ENCODE measurements at regions of chr1 and their contacts with region 1.

Region 1: DNA sequence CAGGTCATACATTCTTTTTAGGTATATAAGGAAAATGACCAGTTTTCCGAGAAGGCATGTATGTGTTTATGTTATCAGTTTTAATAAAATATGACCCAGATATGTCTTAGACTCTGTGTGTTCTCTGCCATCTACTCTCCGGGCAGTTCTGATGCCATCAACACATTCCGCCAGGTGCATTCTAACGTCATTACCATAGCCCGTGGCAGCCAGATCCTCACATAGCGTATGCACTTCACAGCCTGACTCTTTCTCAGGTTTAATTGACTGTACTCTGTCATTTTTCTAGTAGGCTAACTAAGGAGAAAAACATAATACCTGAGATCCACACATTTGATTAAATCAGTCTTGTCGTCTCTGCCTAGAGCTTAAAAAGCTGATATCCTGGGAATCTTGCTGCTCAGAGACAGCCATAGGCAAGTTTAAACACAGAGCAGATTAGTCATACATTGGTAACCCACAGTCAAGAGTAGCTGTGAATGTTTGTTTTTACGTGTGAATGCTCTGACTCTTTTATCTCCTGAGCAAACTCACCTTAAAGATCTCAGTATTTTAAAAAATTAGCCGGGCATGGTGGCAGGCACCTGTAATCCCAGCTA is 175.9 kb downstream of the GREM2 start:
- DNase-seq: no peak
- ATAC-seq: no peak
- H3K4me3 ChIP-seq: no peak overlapping the region
- H3K4me3 Mint-ChIP-seq: no peak overlapping the region
- H3K27ac ChIP-seq: no peak overlapping the region
- H3K27ac Mint-ChIP-seq: no peak overlapping the region
- H3K4me1 ChIP-seq: no peaks in the 10 kb centered on the region
- H3K4me1 Mint-ChIP-seq: no peaks in the 10 kb centered on the region
- H3K27me3 ChIP-seq: no peaks in the 10 kb centered on the region
- H3K27me3 Mint-ChIP-seq: peaks cover 0 to 2% of the 10 kb centered on the region in 2 donors

Region 2: GRCh38 chr1:240462766-240463395 is 26.8 kb after region 1 on chr1:
- CTCF ChIA-PET with region 1: no interaction called
- POLR2A ChIA-PET with region 1: no interaction called
- DNase-seq: no peak
- ATAC-seq: no peak
- H3K4me3 ChIP-seq: no peak overlapping the region
- H3K4me3 Mint-ChIP-seq: no peak overlapping the region
- H3K27ac ChIP-seq: no peak overlapping the region
- H3K27ac Mint-ChIP-seq: no peak overlapping the region
- H3K4me1 ChIP-seq: no peaks in the 10 kb centered on the region
- H3K4me1 Mint-ChIP-seq: peaks cover 0 to 13% (median 10%) of the 10 kb centered on the region in 3 donors
- H3K27me3 ChIP-seq: no peaks in the 10 kb centered on the region
- H3K27me3 Mint-ChIP-seq: no peaks in the 10 kb centered on the region

Region 3: GRCh38 chr1:240526312-240526711 is 90.2 kb after region 1 on chr1:
- CTCF ChIA-PET with region 1: no interaction called
- POLR2A ChIA-PET with region 1: no interaction called
- DNase-seq: no peak
- ATAC-seq: no peak
- H3K4me3 ChIP-seq: no peak overlapping the region
- H3K4me3 Mint-ChIP-seq: no peak overlapping the region
- H3K27ac ChIP-seq: no peak overlapping the region
- H3K27ac Mint-ChIP-seq: no peak overlapping the region
- H3K4me1 ChIP-seq: no peaks in the 10 kb centered on the region
- H3K4me1 Mint-ChIP-seq: no peaks in the 10 kb centered on the region
- H3K27me3 ChIP-seq: no peaks in the 10 kb centered on the region
- H3K27me3 Mint-ChIP-seq: no peaks in the 10 kb centered on the region

Region 4: DNA sequence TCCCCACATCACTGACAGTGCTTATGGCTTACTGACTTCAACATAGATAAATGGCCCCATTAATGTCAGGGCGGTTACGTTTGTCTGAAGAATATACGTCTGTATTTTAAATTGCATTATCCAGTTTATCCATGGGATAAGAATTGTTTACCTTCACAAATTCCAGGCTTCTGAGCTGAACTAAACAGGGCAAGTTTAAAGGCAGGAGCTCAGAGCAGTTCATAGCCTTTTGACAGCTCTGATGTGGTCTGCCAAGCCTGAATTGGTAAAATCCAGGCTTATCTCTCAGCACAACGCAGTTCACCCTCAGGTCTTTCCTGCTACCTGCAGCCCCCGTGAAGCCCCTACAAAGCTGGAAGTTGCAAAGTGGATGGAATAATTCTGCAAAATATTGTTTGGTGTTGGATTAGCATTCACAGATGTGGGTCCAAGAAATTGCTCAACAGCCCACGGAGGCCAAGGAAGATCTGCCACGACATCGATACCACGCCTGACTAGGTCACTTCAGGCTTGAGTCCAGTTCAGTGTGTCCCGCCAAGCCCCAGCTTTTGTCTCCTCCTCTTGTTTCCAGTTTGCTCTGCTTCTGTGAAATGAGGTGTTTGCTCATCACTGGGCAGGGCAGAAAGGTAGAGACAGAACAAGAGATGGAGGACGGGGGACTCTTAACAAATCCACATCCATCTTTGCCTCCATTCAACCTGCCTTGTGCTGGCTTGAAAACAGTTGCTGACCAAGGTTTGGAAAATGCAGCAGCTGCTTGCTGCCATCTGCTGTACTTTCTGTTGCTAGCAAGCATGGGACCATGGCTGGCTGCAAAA is 255.7 kb after region 1 on chr1:
- CTCF ChIA-PET with region 1: interaction called in 1 of 2 experiments, 10 read pairs
- POLR2A ChIA-PET with region 1: no interaction called
- DNase-seq: peak in 7 of 35 experiments; percentile 0 to 35 (median 7)
- ATAC-seq: no peak
- H3K4me3 ChIP-seq: no peak overlapping the region
- H3K4me3 Mint-ChIP-seq: no peak overlapping the region
- H3K27ac ChIP-seq: no peak overlapping the region
- H3K27ac Mint-ChIP-seq: no peak overlapping the region
- H3K4me1 ChIP-seq: no peaks in the 10 kb centered on the region
- H3K4me1 Mint-ChIP-seq: peaks cover 0 to 16% (median 11%) of the 10 kb centered on the region in 3 donors
- H3K27me3 ChIP-seq: no peaks in the 10 kb centered on the region
- H3K27me3 Mint-ChIP-seq: peaks cover 0 to 3% of the 10 kb centered on the region in 2 donors

Region 5: GRCh38 chr1:240765732-240766363 is 329.8 kb after region 1 on chr1:
- CTCF ChIA-PET with region 1: no interaction called
- POLR2A ChIA-PET with region 1: no interaction called
- DNase-seq: no peak
- ATAC-seq: no peak
- H3K4me3 ChIP-seq: no peak overlapping the region
- H3K4me3 Mint-ChIP-seq: no peak overlapping the region
- H3K27ac ChIP-seq: no peak overlapping the region
- H3K27ac Mint-ChIP-seq: no peak overlapping the region
- H3K4me1 ChIP-seq: no peaks in the 10 kb centered on the region
- H3K4me1 Mint-ChIP-seq: no peaks in the 10 kb centered on the region
- H3K27me3 ChIP-seq: no peaks in the 10 kb centered on the region
- H3K27me3 Mint-ChIP-seq: no peaks in the 10 kb centered on the region